ENCODE measurements at regions of chr9 and their contacts with region 1.

Region 1: GRCh38 chr9:69035438-69036308 is at the start of gene FXN:
- DNase-seq: peak; percentile 70 to 84
- ATAC-seq: peak; percentile 97
- H3K4me3 ChIP-seq: peak within 1 kb of the TSS; percentile 70
- H3K27ac ChIP-seq: peak within 1 kb of the TSS; percentile 93 to 98
- H3K4me1 ChIP-seq: peaks cover 7% of the 10 kb centered on the region; the same call in 2 of the 3 replicates
- CTCF ChIP-seq: peak; percentile 98
- EP300 ChIP-seq: no peak
- POLR2A ChIP-seq: peak; percentile 60
- RAD21 ChIP-seq: peak; percentile 51 to 58
- polyA plus RNA-seq, gene FXN: 22.5 and 26.0 TPM in 2 replicates

Region 2: GRCh38 chr9:69186841-69187611 is 151.4 kb after region 1 on chr9:
- CTCF ChIA-PET with region 1: interaction called, 90 read pairs
- POLR2A ChIA-PET with region 1: no interaction called
- DNase-seq: no peak
- ATAC-seq: no peak
- H3K4me3 ChIP-seq: no peak overlapping the region
- H3K27ac ChIP-seq: no peak overlapping the region
- H3K4me1 ChIP-seq: no peaks in the 10 kb centered on the region
- CTCF ChIP-seq: no peak
- EP300 ChIP-seq: no peak
- POLR2A ChIP-seq: no peak
- RAD21 ChIP-seq: no peak

Region 3: DNA sequence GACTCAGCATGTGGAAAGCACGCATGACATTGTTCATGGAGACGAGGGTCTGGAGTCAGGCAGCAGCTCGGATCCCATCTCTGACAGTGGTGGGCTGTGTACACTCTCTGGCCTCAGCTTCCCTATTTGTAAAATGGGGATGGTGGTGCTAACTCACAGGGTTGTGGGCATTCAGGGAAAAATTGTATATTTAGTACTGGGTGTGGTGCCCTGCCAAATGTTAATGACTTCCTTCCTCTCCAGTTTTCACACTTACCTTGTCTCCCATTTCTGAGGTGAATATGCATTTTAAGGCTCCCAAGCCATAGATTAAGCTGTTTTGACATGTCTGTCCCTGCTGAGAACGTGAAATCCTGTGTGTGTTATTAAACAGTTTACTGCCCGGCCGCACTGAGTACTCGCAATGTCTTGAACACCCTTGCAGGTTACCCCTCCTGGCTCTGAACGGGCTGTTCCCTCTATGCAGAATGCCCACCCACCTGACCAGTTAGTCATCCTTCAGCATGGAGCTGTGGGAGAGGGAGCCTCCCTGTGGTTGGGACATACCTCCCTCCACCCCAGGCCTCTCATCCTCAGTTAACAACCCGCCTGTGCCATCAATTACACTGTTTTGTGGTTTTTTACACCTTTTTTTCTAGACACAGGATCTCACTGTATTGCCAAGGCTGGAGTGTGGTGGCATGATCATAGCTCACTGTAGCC is 164.2 kb after region 1 on chr9:
- CTCF ChIA-PET with region 1: interaction called, 90 read pairs
- POLR2A ChIA-PET with region 1: no interaction called
- DNase-seq: no peak
- ATAC-seq: no peak
- H3K4me3 ChIP-seq: no peak overlapping the region
- H3K27ac ChIP-seq: no peak overlapping the region
- H3K4me1 ChIP-seq: no peaks in the 10 kb centered on the region
- CTCF ChIP-seq: no peak
- EP300 ChIP-seq: no peak
- POLR2A ChIP-seq: no peak
- RAD21 ChIP-seq: no peak